ENCODE measurements at regions of chr1 and their contacts with region 1.

Region 1: DNA sequence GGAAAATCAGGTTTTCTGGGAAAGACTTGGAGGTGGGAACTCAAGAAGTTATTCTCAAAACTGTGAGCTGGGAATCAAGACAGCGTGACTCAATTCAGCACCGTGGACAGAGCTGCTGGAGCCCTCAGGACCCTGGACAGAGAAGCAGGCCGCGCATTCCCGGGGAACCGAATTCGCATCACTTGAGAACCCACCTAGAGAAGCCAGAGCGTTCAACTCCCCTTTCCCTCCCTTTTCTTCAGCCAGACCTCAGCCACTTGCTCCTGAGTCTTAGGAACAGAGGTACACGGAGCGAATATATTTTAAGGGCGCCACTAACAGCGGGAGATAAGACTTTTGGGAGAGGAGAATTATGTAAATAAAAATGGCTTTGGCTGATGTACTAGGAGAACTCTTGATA is 2.0 kb upstream of the LIN28A start:
- DNase-seq: peak; percentile 65 to 87 (median 81)
- ATAC-seq: peak; percentile 99
- H3K4me3 ChIP-seq: no peak overlapping the region
- H3K4me3 Mint-ChIP-seq: peak overlapping the region; percentile 62
- H3K27ac ChIP-seq: no peak overlapping the region
- H3K27ac Mint-ChIP-seq: no peak overlapping the region
- H3K4me1 ChIP-seq: peaks cover 17% of the 10 kb centered on the region
- H3K4me1 Mint-ChIP-seq: peaks cover 22% of the 10 kb centered on the region
- H3K27me3 ChIP-seq: peaks cover 26 to 42% of the 10 kb centered on the region in 2 experiments
- H3K27me3 Mint-ChIP-seq: peaks cover 54% of the 10 kb centered on the region
- CTCF ChIP-seq: no peak

Region 2: DNA sequence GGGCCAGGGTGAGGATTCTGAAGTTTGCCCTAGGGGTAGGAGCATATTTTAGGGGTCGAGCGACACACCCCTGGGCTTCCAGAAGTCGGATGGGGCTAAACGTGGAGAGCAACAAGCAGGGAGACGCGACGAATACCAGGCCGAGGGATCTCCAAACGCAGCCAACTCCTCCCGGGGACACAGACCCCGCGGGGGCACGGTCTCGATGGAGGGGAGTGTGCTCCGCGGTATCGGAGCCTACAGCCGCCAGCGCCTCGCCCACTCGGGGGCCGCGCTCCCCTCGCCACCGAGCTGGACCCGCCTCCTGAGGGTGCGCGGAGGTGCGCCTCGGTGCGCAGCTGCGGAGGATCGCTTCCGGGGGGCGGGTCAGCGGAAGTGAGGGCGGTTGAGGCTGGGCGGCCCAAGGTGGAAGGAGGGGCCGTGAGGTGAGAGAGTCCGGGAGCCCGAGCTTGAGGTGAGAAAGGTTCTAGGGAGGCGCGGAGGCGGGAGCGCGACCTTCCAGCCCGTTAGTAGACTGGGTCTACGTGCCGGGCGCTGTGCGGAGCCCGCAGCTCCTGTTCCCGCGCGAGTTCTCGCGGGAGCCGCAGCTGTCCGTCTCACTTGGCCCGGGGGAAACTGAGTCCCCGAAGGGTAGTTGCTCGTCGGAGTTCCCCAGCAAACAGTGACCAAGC is 588.9 kb before region 1 on chr1 and contains the start of gene MTFR1L:
- CTCF ChIA-PET with region 1: no interaction called
- POLR2A ChIA-PET with region 1: no interaction called
- intact Hi-C with region 1: no loop called
- DNase-seq: peak; percentile 78 to 96 (median 94)
- ATAC-seq: peak; percentile 87
- H3K4me3 ChIP-seq: peak within 1 kb of the TSS; percentile 74 to 95
- H3K4me3 Mint-ChIP-seq: peak within 1 kb of the TSS; percentile 94
- H3K27ac ChIP-seq: peak within 1 kb of the TSS; percentile 65 to 77
- H3K27ac Mint-ChIP-seq: peak within 1 kb of the TSS; percentile 97
- H3K4me1 ChIP-seq: peaks cover 20% of the 10 kb centered on the region
- H3K4me1 Mint-ChIP-seq: peaks cover 35% of the 10 kb centered on the region
- H3K27me3 ChIP-seq: no peaks in the 10 kb centered on the region
- H3K27me3 Mint-ChIP-seq: no peaks in the 10 kb centered on the region
- CTCF ChIP-seq: no peak
- total RNA-seq, gene MTFR1L: 22.9 to 25.7 TPM

Region 3: DNA sequence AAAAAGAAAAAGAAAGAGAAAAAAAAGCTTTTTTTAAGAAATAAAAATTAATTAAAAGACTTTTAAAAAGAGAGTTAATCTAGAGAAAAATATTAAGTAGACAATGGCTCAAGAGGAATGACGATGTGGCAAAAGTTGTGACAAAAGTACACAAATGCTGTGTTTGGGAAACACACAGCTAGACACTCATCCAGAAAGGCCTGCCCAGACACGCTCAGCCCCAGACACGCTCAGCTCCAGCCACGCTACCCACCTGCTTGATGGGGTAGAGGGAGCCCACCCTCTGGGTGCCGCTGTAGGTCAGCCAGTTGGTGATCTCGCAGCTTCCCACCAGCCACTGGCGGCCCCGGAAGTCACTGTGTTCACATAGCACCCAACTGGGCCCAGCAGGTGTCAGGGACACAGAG is 80.6 kb before region 1 on chr1:
- CTCF ChIA-PET with region 1: no interaction called
- POLR2A ChIA-PET with region 1: no interaction called
- intact Hi-C with region 1: no loop called
- DNase-seq: no peak
- ATAC-seq: no peak
- H3K4me3 ChIP-seq: no peak overlapping the region
- H3K4me3 Mint-ChIP-seq: no peak overlapping the region
- H3K27ac ChIP-seq: no peak overlapping the region
- H3K27ac Mint-ChIP-seq: no peak overlapping the region
- H3K4me1 ChIP-seq: no peaks in the 10 kb centered on the region
- H3K4me1 Mint-ChIP-seq: peaks cover 11% of the 10 kb centered on the region
- H3K27me3 ChIP-seq: no peaks in the 10 kb centered on the region
- H3K27me3 Mint-ChIP-seq: no peaks in the 10 kb centered on the region
- CTCF ChIP-seq: no peak

Region 4: DNA sequence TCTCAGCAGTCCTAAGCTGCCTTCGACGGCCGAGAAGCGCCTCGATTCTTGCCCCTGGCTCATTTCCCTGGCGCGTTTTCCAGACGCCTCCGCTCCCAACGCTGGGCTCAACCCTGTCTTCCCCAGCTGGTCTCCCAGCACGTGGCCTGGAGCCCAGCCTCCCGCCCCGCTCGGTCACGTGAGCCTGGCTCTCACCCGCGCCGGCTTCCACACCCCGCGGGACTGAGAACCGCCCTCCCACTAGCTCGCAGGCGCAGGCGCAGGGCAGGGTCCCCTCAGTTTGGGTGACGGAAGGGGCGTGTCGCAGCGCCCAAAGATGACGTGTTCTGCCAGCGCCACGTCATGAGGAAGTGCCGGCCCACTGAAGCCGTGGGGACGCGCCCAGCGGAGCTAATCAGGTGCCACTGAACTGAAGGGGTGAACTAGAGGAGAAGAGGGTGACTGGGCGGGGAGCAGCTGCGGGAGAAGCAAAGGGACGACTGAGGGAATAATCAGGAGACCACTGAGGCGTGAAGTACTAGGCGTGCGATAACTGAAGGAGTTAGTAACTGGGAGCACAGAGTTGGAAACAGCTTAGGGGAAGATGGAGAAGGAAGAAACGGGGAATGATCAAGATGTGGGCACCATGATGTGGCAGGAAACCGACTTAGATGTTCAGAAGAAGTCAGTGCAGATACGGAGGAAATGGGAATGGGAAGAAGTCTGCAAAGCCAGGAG is 23.5 kb after region 1 on chr1 and contains the start of gene DHDDS:
- CTCF ChIA-PET with region 1: no interaction called
- POLR2A ChIA-PET with region 1: interaction called, 3 read pairs
- intact Hi-C with region 1: loop called in 1 of 2 experiments (anchors 1 kb)
- DNase-seq: peak; percentile 96 to 99 (median 99)
- ATAC-seq: peak; percentile 96
- H3K4me3 ChIP-seq: peak within 1 kb of the TSS; percentile 72 to 78
- H3K4me3 Mint-ChIP-seq: peak within 1 kb of the TSS; percentile 95
- H3K27ac ChIP-seq: peak within 1 kb of the TSS; percentile 73 to 81
- H3K27ac Mint-ChIP-seq: peak within 1 kb of the TSS; percentile 96
- H3K4me1 ChIP-seq: peaks cover 20% of the 10 kb centered on the region
- H3K4me1 Mint-ChIP-seq: peaks cover 21% of the 10 kb centered on the region
- H3K27me3 ChIP-seq: no peaks in the 10 kb centered on the region
- H3K27me3 Mint-ChIP-seq: no peaks in the 10 kb centered on the region
- CTCF ChIP-seq: no peak
- total RNA-seq, gene DHDDS: 23.9 to 29.2 TPM